Activated B cell treated with CpG ODN at 0.5 μM for 24 hours (primary cell): ENCODE measurements at regions of chr12 and their contacts with region 1.

Region 1: DNA sequence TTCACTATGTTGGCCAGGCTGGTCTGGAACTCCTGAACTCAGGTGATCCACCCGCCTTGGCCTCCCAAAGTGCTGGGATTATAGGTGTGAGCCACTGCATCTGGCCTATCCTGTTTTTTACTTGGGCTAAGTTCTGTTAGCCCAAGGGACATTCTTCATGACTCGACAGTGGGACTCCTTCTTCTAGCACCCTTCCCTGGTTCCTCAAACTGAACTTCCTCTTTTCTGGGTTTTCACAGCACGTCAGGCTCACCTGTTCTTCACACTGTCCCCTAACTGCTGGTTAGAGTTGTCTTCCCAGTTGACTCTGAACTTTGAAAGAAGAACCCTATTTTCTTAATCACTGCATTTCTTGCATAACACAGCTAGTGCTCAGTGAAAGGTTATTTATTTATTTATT is 22.5 kb downstream of the CABP1 start:
- DNase-seq: no peak
- ATAC-seq: peak; percentile 96
- H3K4me3 Mint-ChIP-seq: peak overlapping the region; percentile 48
- H3K27ac Mint-ChIP-seq: peak overlapping the region; percentile 42
- H3K4me1 Mint-ChIP-seq: peaks cover 32% of the 10 kb centered on the region
- H3K27me3 Mint-ChIP-seq: no peaks in the 10 kb centered on the region
- CTCF ChIP-seq: no peak

Region 2: DNA sequence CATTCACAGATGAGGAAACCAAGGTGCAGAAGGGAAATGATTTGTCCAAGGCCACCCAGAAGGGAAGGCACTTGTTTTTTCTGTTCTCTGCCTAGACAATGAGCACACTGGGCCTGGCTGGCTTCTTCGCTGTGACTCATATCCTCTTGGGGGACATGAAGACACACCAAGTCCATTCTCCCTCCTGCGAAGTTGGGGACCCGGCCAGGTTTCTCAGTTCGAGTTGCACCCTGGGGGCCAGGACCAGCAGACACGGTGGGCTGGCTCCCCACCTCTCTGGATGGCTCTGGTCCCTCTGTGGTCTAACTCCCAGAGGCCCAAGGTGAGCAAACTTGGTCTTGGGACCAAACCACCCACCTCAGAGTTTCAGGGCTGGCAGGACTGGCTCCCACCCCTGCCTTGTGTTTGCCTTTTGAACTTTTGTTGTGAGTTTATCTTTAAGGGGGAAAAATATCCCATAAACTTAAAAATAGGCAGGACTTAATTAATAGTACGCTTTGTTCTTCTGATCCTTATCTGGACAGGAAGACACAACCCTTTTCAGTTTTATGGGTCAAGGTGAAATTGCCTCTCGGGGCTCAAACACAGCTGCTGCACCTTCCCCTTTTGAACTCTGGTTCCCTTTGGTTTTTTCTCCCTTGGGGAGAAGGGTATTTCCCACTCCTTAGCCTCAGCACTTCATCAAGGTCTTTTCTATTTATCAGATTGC is 15.0 kb after region 1 on chr12:
- CTCF ChIA-PET with region 1: interaction called, 3 read pairs
- POLR2A ChIA-PET with region 1: interaction called, 60 read pairs
- intact Hi-C with region 1: loop called (anchors 1 kb)
- DNase-seq: no peak
- ATAC-seq: peak; percentile 71
- H3K4me3 Mint-ChIP-seq: peak overlapping the region; percentile 74
- H3K27ac Mint-ChIP-seq: peak overlapping the region; percentile 89
- H3K4me1 Mint-ChIP-seq: peaks cover 58% of the 10 kb centered on the region
- H3K27me3 Mint-ChIP-seq: no peaks in the 10 kb centered on the region
- CTCF ChIP-seq: no peak